Dendritic cell treated with granulocyte-macrophage colony-stimulating factor and Interleukin-4, amounts not matched to agents 40 ng/mL and 50 ng/mL, for 4 days (primary cell): ENCODE measurements at regions of chr12 and their contacts with region 1.

Region 1: DNA sequence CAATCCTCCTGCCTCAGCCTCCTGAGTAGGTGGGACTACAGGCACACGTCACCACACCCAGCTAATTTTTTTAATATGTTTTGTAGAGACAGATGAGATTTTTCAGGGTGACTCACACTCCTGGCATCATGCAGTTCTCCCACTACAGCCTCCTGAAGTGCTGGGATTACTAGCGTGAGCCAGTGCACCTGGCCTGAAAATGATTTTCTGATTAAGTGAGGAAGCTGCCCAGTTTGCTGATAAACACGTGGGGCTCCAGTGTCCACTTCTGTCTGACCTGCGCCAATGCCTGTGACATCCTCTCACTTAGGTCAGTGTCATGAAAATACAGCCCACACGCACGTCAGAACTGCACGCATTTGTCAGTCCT is 37.0 kb upstream of the SFSWAP start:
- H3K4me3 Mint-ChIP-seq: no peak overlapping the region
- H3K27ac Mint-ChIP-seq: peak overlapping the region; percentile 86
- H3K4me1 Mint-ChIP-seq: peaks cover 20% of the 10 kb centered on the region
- H3K27me3 Mint-ChIP-seq: peaks cover 23% of the 10 kb centered on the region

Region 2: GRCh38 chr12:131290255-131290959 is 383.5 kb before region 1 on chr12:
- intact Hi-C with region 1: loop called (anchors 10 kb)
- H3K4me3 Mint-ChIP-seq: no peak overlapping the region
- H3K27ac Mint-ChIP-seq: no peak overlapping the region
- H3K4me1 Mint-ChIP-seq: no peaks in the 10 kb centered on the region
- H3K27me3 Mint-ChIP-seq: no peaks in the 10 kb centered on the region